Heart left ventricle (tissue), 16 donors: ENCODE measurements at regions of chr19 and their contacts with region 1.

Region 1: GRCh38 chr19:53936029-53936428 is 26.7 kb upstream of the CACNG8 start:
- DNase-seq: no peak
- ATAC-seq: no peak
- H3K4me3 ChIP-seq: no peak overlapping the region
- H3K27ac ChIP-seq: no peak overlapping the region
- H3K4me1 ChIP-seq: no peaks in the 10 kb centered on the region
- H3K27me3 ChIP-seq: peaks cover 0 to 32% (median 12%) of the 10 kb centered on the region in 9 donors
- CTCF ChIP-seq: no peak
- POLR2A ChIP-seq: no peak

Region 2: DNA sequence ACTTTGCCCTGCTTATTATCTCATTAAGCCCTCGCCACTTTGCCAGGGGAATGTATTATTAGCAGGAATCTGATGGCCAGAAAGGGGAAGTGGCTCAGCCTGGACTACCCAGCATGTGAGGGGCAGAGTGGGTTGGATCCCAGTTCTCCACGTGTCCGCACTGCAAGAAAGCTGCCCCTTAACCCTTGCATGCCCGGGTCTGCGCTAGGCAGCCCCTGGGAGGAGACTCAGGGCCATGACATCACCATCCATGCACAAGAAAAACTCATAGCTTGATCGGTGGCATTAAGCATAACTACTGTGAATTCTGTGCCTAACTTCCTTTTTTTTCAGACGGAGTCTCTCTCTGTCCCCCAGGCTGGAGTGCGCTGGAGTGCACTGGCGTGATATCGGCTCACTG is 35.6 kb after region 1 on chr19:
- intact Hi-C with region 1: no loop called
- DNase-seq: no peak
- ATAC-seq: no peak
- H3K4me3 ChIP-seq: no peak overlapping the region
- H3K27ac ChIP-seq: no peak overlapping the region
- H3K4me1 ChIP-seq: no peaks in the 10 kb centered on the region
- H3K27me3 ChIP-seq: peaks cover 0 to 29% (median 0%) of the 10 kb centered on the region in 9 donors
- CTCF ChIP-seq: no peak
- POLR2A ChIP-seq: no peak

Region 3: DNA sequence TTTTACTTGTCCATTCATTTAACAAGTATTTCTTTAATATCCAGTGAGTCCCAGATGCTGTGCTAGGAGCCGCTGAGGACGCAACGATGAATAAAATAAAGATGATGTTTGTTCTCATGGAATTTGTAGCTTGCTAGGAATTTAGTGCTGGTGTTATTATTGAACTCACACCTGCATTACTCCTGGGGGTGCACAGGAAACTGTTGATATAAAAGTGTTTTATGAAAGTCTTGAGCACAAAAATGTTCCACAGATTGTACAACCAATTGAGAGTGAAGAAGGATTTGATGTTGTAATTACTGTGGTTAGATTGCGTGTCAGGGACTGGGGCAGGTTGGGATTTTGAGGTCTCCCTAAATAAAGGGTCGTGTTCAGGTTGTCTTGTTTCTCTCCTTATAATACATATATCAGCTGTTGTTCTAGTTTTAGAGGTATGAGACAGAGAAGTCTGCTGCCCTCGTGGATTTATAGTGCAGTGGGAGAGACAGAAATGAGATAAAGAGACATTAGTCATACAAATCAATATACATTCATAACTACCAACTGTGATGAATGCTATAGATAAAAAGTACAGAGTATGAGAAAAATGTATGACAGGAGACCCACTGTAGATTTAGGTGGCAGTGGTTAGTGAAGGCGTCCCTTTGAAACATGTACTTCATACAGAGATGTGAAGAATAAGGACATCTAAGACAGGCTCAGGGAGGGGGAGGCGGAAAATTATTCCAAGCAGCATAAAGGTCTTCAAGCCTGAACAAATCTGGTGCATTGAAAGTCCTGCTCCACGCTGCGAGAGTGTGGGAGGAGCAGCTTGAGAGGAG is 66.7 kb after region 1 on chr19:
- intact Hi-C with region 1: loop called in 1 of 10 experiments (anchors 10 kb)
- DNase-seq: no peak
- ATAC-seq: no peak
- H3K4me3 ChIP-seq: no peak overlapping the region
- H3K27ac ChIP-seq: no peak overlapping the region
- H3K4me1 ChIP-seq: no peaks in the 10 kb centered on the region
- H3K27me3 ChIP-seq: peaks cover 0 to 70% (median 26%) of the 10 kb centered on the region in 9 donors
- CTCF ChIP-seq: no peak
- POLR2A ChIP-seq: no peak

Region 4: GRCh38 chr19:54630782-54631181 is 694.8 kb after region 1 on chr19:
- intact Hi-C with region 1: no loop called
- DNase-seq: no peak
- ATAC-seq: peak in 2 of 4 donors; percentile 25 to 31
- H3K4me3 ChIP-seq: peak overlapping the region in 5 of 12 donors; percentile 15 to 57 (median 22)
- H3K27ac ChIP-seq: peak overlapping the region in 1 of 12 donors; percentile 81
- H3K4me1 ChIP-seq: peaks cover 0 to 7% (median 0%) of the 10 kb centered on the region in 12 donors
- H3K27me3 ChIP-seq: peaks cover 0 to 36% (median 6%) of the 10 kb centered on the region in 9 donors
- CTCF ChIP-seq: no peak
- POLR2A ChIP-seq: no peak